Lower leg skin (tissue), 4 donors: ENCODE measurements at regions of chr3 and their contacts with region 1.

Region 1: DNA sequence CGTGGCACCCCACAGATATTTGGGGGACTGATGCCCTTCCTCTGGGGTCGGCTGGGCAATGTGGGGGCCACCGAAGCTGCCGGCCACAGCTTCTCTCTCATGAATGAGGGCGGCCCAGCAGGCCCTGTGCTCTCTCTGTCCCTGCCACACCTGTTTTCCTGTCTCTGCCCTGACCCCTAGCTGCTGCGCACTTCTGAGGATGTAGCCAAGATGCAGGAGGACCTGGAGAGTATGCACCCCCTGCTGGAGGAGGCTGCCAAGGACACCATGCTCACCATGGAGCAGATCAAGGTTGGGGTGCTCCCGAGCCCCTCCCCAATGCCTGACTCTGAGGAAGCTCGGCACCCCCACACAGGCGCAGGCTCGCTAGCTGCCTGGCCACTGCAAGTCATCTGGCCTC is 59.7 kb downstream of the SEMA3G start:
- DNase-seq: no peak
- H3K4me3 ChIP-seq: no peak overlapping the region
- CTCF ChIP-seq: no peak
- POLR2A ChIP-seq: no peak

Region 2: GRCh38 chr3:52220380-52221026 is 164.7 kb before region 1 on chr3:
- intact Hi-C with region 1: no loop called
- DNase-seq: peak; percentile 80 to 98
- H3K4me3 ChIP-seq: no peak overlapping the region
- CTCF ChIP-seq: peak in 1 of 3 donors; percentile 49
- POLR2A ChIP-seq: no peak

Region 3: DNA sequence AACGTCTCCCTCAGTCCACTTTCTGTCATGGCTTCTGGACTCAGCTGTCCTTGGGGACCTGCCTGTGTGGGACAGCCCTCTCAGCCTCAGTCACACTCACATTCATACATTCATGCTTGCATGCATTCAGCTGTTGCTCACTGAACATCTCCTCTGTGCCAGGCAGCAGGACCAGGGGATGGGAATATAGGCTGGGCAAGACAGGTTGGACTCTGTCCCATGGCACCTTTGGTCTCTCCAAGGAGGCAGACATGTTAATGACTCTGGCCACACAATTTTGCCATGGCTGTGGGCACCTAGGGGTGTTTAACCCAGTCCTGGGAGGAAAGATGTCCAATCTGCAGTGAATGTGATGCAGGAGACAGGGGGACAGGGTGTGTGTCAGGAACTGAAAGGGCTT is 76.8 kb before region 1 on chr3:
- intact Hi-C with region 1: loop called (anchors 5 kb)
- DNase-seq: no peak
- H3K4me3 ChIP-seq: no peak overlapping the region
- CTCF ChIP-seq: no peak
- POLR2A ChIP-seq: no peak